ENCODE measurements at regions of chr3 and their contacts with region 1.

Region 1: DNA sequence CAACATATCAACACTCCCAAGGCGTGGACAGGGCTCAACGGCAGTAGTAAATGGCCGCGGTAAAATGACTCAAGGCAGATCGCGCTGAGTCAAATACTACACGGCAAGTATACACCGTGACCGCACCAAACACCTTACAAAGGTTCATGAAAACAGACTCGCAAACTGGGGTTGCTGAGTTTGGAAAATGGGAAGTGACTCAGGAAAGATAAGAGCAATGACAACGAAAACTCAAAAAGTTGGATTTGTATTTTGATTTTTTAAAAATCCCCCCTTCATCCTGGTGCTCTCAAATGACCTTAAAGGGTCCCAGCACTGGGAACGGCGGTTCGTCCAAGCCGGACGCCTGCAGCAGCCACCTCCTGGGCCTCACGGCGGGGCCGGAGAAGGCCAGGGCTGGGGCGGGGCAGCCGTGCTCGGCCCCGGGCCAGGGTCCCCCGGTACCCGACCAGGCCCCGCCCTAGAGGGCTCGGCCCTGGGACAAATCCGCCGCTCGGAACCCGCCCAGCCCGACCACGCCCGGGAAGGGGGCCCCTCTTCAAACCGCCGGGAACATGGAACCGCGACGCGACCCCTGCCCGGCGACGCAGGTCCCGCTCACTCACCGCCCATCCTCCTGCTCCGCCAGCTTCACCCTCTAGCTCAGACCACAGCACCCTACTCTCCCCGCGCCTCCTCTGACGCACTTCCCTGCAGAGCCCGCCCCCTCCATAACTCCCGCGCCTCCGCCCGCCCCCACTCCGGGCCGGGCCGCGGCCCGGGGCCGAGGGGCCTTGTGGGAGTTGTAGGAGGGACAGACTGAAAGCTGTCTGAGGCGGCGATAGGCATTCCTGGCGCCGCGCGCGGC is at the start of gene CLDND1:
- DNase-seq: peak; percentile 93
- ATAC-seq: peak; percentile 95
- H3K4me3 Mint-ChIP-seq: peak within 1 kb of the TSS; percentile 99
- H3K27ac Mint-ChIP-seq: peak within 1 kb of the TSS; percentile 99
- H3K4me1 Mint-ChIP-seq: peaks cover 48% of the 10 kb centered on the region
- H3K27me3 Mint-ChIP-seq: no peaks in the 10 kb centered on the region
- total RNA-seq, gene CLDND1: 534 to 542 TPM

Region 2: GRCh38 chr3:98497381-98497780 is 25.1 kb before region 1 on chr3 and contains the start of gene OR5K2:
- POLR2A ChIA-PET with region 1: no interaction called
- DNase-seq: no peak
- ATAC-seq: no peak
- H3K4me3 Mint-ChIP-seq: no peak within 1 kb of the TSS
- H3K27ac Mint-ChIP-seq: no peak within 1 kb of the TSS
- H3K4me1 Mint-ChIP-seq: no peaks in the 10 kb centered on the region
- H3K27me3 Mint-ChIP-seq: peaks cover 14% of the 10 kb centered on the region
- total RNA-seq, gene OR5K2: not detected

Region 3: DNA sequence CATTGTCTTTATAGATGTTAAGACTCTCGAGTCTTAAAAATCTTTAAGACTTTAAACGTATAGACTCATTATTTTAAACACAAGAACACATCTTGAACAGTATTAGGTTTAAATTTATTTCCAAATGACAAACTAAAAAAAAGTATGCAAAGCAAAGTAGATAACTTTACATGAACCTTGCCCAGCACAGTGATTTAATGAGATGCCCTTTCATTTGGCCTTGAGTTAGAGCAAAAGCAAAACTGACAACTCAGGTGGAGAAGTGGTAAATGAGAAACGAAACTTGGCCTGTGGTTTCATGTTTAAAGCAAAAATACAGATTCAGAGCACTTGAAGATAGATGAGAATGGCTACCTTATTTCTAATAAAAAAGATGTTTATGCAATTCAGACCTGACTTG is 17.9 kb after region 1 on chr3:
- POLR2A ChIA-PET with region 1: interaction called, 23 read pairs
- DNase-seq: no peak
- ATAC-seq: peak; percentile 68
- H3K4me3 Mint-ChIP-seq: peak overlapping the region; percentile 57
- H3K27ac Mint-ChIP-seq: peak overlapping the region; percentile 85
- H3K4me1 Mint-ChIP-seq: peaks cover 54% of the 10 kb centered on the region
- H3K27me3 Mint-ChIP-seq: no peaks in the 10 kb centered on the region

Region 4: GRCh38 chr3:98545940-98546339 is 23.5 kb after region 1 on chr3:
- POLR2A ChIA-PET with region 1: interaction called, 23 read pairs
- DNase-seq: no peak
- ATAC-seq: peak; percentile 72
- H3K4me3 Mint-ChIP-seq: peak overlapping the region; percentile 82
- H3K27ac Mint-ChIP-seq: peak overlapping the region; percentile 92
- H3K4me1 Mint-ChIP-seq: peaks cover 59% of the 10 kb centered on the region
- H3K27me3 Mint-ChIP-seq: no peaks in the 10 kb centered on the region

Region 5: GRCh38 chr3:98556164-98557130 is 34.0 kb after region 1 on chr3:
- POLR2A ChIA-PET with region 1: interaction called, 92 read pairs
- DNase-seq: peak; percentile 50
- ATAC-seq: peak; percentile 91
- H3K4me3 Mint-ChIP-seq: peak overlapping the region; percentile 91
- H3K27ac Mint-ChIP-seq: peak overlapping the region; percentile 93
- H3K4me1 Mint-ChIP-seq: peaks cover 70% of the 10 kb centered on the region
- H3K27me3 Mint-ChIP-seq: no peaks in the 10 kb centered on the region

Region 6: GRCh38 chr3:98563661-98564281 is 41.3 kb after region 1 on chr3:
- POLR2A ChIA-PET with region 1: interaction called, 92 read pairs
- DNase-seq: no peak
- ATAC-seq: peak; percentile 6
- H3K4me3 Mint-ChIP-seq: peak overlapping the region; percentile 89
- H3K27ac Mint-ChIP-seq: peak overlapping the region; percentile 99
- H3K4me1 Mint-ChIP-seq: peaks cover 70% of the 10 kb centered on the region
- H3K27me3 Mint-ChIP-seq: no peaks in the 10 kb centered on the region

Region 7: DNA sequence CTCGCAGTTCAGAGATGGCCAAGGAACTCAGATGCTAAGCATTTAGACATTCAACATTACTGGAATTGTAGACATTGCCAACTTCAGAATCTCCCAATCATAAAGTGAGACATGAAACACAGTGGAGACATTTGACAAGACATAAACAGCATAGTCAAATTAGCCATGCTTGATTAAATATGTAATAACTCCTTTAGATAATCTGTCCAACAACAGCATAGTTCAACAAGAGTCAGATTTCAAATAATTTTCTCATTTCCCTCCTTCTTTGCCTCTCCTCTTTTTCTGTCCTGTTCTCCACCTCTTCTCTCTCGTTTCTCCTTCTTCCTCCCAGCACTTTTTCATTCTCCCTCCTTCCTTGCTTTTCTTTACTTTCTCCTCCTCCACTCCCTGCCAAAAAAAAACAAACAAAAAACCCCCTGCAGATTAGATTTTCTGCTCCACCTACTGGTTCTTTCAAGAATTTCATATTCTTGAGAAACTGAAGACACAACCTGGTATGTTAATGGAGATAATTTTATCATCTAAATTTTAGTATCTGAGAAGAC is 50.8 kb after region 1 on chr3:
- POLR2A ChIA-PET with region 1: interaction called, 15 read pairs
- DNase-seq: no peak
- ATAC-seq: peak; percentile 37
- H3K4me3 Mint-ChIP-seq: peak overlapping the region; percentile 52
- H3K27ac Mint-ChIP-seq: peak overlapping the region; percentile 81
- H3K4me1 Mint-ChIP-seq: peaks cover 42% of the 10 kb centered on the region
- H3K27me3 Mint-ChIP-seq: no peaks in the 10 kb centered on the region

Region 8: GRCh38 chr3:98593046-98593936 is 70.8 kb after region 1 on chr3 and contains the start of gene CPOX:
- POLR2A ChIA-PET with region 1: interaction called, 45 read pairs
- DNase-seq: peak; percentile 89
- ATAC-seq: peak; percentile 97
- H3K4me3 Mint-ChIP-seq: peak within 1 kb of the TSS; percentile 98
- H3K27ac Mint-ChIP-seq: peak within 1 kb of the TSS; percentile 97
- H3K4me1 Mint-ChIP-seq: peaks cover 47% of the 10 kb centered on the region
- H3K27me3 Mint-ChIP-seq: no peaks in the 10 kb centered on the region
- total RNA-seq, gene CPOX: 51.1 to 52.2 TPM

Measured in activated naive CD8-positive, alpha-beta T cell treated with anti-CD3 and anti-CD28 coated beads, Interleukin-2, amount 10 ng/mL, durations not matched to agents 7 days and 5 days (primary cell).